ENCODE measurements at regions of chr2 and their contacts with region 1.

Region 1: DNA sequence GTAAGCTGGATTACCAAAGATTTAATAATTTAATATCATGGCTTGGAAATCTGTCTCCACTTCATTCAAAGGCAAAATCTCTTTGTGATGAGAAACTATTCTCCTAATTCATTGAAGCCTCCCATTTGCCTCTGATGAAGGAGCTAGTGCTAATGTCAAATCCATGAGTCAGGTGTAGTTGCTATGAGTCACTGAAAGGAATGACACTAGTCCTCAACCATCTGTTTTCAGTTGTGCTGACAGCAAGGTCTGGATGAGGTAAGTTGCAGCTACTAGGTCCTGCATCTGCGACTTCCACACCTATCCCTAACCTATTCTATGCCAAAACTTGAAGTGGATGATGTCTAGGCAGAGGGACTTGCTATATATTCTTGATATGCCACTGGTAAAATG is 324.0 kb upstream of the UBE2E3 start:
- DNase-seq: no peak
- H3K4me3 ChIP-seq: no peak overlapping the region
- H3K4me3 Mint-ChIP-seq: no peak overlapping the region
- H3K27ac Mint-ChIP-seq: no peak overlapping the region
- H3K4me1 ChIP-seq: no peaks in the 10 kb centered on the region; the same call in 1 of the 2 replicates
- H3K4me1 Mint-ChIP-seq: no peaks in the 10 kb centered on the region
- H3K27me3 ChIP-seq: no peaks in the 10 kb centered on the region
- H3K27me3 Mint-ChIP-seq: peaks cover 3% of the 10 kb centered on the region
- CTCF ChIP-seq: no peak

Region 2: GRCh38 chr2:180535289-180535688 is 121.2 kb before region 1 on chr2:
- CTCF ChIA-PET with region 1: no interaction called
- POLR2A ChIA-PET with region 1: no interaction called
- intact Hi-C with region 1: no loop called
- DNase-seq: no peak
- H3K4me3 ChIP-seq: no peak overlapping the region
- H3K4me3 Mint-ChIP-seq: no peak overlapping the region
- H3K27ac Mint-ChIP-seq: no peak overlapping the region
- H3K4me1 ChIP-seq: 0 out of 2 replicates have a peak, but pooled peaks cover 3% of the 10 kb centered on the region
- H3K4me1 Mint-ChIP-seq: no peaks in the 10 kb centered on the region
- H3K27me3 ChIP-seq: no peaks in the 10 kb centered on the region
- H3K27me3 Mint-ChIP-seq: peaks cover 2% of the 10 kb centered on the region
- CTCF ChIP-seq: no peak

Region 3: DNA sequence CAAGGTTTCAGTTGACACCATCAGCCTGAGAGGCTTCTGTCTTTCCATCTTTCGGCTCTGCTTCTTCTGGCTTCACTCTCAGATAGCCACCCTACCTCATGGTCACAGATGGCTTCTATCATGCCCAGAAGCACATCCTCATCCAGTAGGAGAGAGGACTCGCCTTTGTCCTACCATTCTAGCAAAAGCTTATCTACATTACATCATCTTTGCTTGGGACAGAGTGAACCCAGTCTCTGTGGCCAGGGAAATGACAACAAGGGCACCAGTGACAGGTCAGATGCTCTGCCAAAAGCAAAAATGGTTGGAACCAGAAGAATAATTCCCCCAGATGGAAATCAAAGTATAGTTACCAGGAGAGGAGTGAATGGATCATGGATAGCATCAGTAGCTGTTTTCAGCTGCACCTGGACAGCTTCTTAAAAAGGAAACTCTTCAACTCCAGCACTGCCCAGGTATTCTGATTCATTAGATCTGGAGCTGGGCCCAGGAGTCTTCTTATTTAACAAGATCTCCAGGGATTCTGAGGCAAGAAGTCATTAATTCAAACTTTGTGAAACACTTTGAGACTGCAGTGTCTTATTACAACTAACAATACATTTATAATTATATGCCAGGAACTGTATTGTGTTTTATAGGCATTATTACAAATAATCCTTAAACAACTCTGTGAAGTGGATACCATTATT is 66.2 kb after region 1 on chr2:
- CTCF ChIA-PET with region 1: no interaction called
- POLR2A ChIA-PET with region 1: no interaction called
- intact Hi-C with region 1: loop called (anchors 2 kb)
- DNase-seq: no peak
- H3K4me3 ChIP-seq: no peak overlapping the region
- H3K4me3 Mint-ChIP-seq: no peak overlapping the region
- H3K27ac Mint-ChIP-seq: no peak overlapping the region
- H3K4me1 ChIP-seq: no peaks in the 10 kb centered on the region
- H3K4me1 Mint-ChIP-seq: no peaks in the 10 kb centered on the region
- H3K27me3 ChIP-seq: no peaks in the 10 kb centered on the region
- H3K27me3 Mint-ChIP-seq: no peaks in the 10 kb centered on the region
- CTCF ChIP-seq: no peak

Region 4: DNA sequence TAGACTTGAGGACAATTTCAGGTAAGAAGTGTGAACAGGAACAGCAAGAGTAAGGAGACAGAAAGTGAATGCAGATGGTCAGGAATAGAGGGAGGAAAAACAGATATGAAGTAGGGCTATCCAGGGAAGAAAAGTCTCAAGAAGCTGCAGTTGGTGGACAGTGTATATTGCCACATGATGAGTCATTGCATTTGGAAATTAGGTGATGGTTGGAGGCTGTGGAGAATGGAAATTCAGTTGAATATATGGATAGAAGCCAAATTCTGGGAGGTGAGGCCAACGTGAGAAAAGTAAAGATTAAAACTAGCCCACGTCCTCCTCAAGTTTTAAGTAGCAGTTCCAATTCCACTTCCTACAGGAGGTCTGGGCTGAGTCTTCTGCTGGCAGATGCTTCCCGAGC is 482.4 kb after region 1 on chr2:
- CTCF ChIA-PET with region 1: no interaction called
- POLR2A ChIA-PET with region 1: no interaction called
- intact Hi-C with region 1: no loop called
- DNase-seq: no peak
- H3K4me3 ChIP-seq: no peak overlapping the region
- H3K4me3 Mint-ChIP-seq: no peak overlapping the region
- H3K27ac Mint-ChIP-seq: no peak overlapping the region
- H3K4me1 ChIP-seq: no peaks in the 10 kb centered on the region
- H3K4me1 Mint-ChIP-seq: no peaks in the 10 kb centered on the region
- H3K27me3 ChIP-seq: no peaks in the 10 kb centered on the region
- H3K27me3 Mint-ChIP-seq: no peaks in the 10 kb centered on the region
- CTCF ChIP-seq: no peak